Sciatic nerve (tissue), 2 donors: ENCODE measurements at regions of chr5 and their contacts with region 1.

Region 1: GRCh38 chr5:128799945-128800344 is 165.3 kb upstream of the SLC27A6 start:
- DNase-seq: no peak
- ATAC-seq: no peak

Region 2: DNA sequence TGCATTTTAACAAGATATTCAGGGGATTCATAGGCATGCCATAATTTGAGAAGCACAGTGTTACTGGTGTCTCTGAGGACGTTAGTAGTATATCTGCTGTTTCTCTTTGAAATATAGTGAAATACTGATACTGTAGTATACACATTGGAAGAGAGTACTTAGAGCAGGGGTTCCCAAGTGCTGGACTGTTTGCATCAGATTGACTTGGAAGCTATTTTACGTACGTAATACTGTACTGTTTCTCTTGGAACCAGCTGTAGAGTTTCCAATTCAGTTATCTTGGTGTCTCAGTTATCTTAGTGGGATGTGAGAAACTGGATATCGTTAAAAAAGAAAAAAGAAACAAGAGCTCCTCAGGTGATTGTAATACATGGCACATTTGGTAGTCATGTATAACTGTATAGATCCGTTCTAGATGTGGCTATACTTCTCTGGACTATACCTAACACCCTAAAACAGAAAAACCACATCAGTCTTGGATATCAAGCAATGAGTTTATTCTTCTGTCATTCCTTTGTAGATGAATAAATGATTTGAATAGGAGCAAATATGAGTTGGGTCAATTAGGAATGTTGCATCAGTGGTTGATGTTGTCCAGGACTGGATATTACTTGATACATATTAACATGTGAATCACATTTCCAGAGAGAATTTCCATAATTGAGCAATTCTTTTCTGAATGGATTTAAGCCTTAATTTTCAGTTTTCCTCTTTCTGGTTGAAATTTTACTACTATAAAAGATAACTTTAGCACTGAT is 1249.1 kb before region 1 on chr5:
- intact Hi-C with region 1: loop called (anchors 5 kb)
- DNase-seq: no peak
- ATAC-seq: peak; percentile 72

Region 3: GRCh38 chr5:128470638-128471037 is 329.3 kb before region 1 on chr5:
- intact Hi-C with region 1: no loop called
- DNase-seq: no peak
- ATAC-seq: no peak

Region 4: GRCh38 chr5:128695791-128696530 is 104.0 kb before region 1 on chr5:
- intact Hi-C with region 1: no loop called
- DNase-seq: no peak
- ATAC-seq: no peak